K562 (cell line): ENCODE measurements at regions of chr22 and their contacts with region 1.

Region 1: DNA sequence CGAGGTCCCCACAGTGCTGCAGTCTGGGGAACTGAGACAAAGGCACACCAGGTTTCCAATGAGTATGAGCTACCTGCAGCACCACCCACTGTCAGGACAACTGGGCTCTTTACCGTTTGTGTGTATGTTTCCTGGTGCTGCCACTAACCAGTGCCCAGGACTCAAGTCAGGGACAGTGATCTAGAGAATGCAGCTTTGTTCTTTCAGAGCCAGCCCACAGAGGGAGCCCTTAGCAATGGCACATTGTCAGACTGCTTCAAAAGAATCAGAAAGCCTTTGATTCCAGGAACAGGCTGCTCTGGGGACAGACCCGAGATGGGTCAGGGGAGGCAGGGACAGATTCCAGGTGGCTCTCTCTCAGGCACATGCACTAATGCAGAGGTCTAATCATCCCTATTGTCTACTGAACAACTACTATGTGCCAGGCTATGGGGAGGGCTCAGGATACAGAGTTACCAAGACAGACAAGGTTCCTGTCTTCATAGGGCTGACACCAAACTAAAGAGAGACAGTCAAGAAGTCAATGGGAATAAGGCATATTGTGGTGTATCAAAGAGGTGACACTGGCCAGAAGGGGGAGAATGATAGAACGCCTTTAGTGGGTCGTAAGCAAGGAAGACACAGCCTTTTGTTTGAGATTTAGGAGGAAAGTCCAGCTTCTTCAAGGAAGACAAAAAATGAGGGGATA is 103.7 kb downstream of the VPREB1 start:
- DNase-seq: peak in 1 of 4 experiments; percentile 55
- ATAC-seq: peak; percentile 73
- H3K4me3 ChIP-seq: no peak overlapping the region
- H3K27ac ChIP-seq: no peak overlapping the region
- H3K4me1 ChIP-seq: no peaks in the 10 kb centered on the region
- H3K27me3 ChIP-seq: peaks cover 22 to 34% of the 10 kb centered on the region in 2 experiments
- CTCF ChIP-seq: peak in 2 of 3 experiments; percentile 68 to 75; a peak in 4 of 6 replicates
- EP300 ChIP-seq: no peak
- POLR2A ChIP-seq: no peak
- RAD21 ChIP-seq: no peak

Region 2: GRCh38 chr22:22380098-22381030 is 32.1 kb after region 1 on chr22:
- CTCF ChIA-PET with region 1: interaction called, 3 read pairs
- POLR2A ChIA-PET with region 1: interaction called, 8 read pairs
- in situ Hi-C with region 1: no loop called
- intact Hi-C with region 1: loop called (anchors 1 kb)
- DNase-seq: peak; percentile 80 to 91 (median 88)
- ATAC-seq: peak; percentile 87
- H3K4me3 ChIP-seq: no peak overlapping the region
- H3K27ac ChIP-seq: no peak overlapping the region
- H3K4me1 ChIP-seq: no peaks in the 10 kb centered on the region
- H3K27me3 ChIP-seq: peaks cover 14 to 33% of the 10 kb centered on the region in 2 experiments
- CTCF ChIP-seq: peak; percentile 78 to 87 (median 83)
- EP300 ChIP-seq: no peak
- POLR2A ChIP-seq: no peak
- RAD21 ChIP-seq: peak in 1 of 2 experiments; percentile 22; a peak in 1 of 4 replicates